ENCODE measurements at regions of chrX and their contacts with region 1.

Region 1: DNA sequence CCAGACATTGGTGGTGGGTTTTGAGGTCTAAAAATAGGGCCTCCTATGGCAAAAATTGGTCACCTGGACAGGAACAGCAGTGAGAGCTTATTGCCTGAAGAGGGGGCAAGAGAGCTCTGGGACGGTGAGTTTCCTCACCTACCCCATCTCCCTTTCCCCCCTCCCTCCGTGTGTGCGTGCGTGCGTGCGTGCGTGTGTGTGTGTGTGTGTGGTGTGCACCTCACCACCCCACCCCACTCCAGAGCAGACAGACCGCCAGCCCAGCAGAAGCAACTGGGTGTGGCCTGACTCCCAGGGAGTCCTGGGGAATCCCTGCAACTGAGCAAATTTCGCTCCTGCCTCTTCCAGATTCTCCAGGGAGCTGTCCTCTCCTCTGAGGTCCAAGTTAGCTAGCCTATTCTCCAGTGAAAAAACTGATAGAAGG is 44.7 kb downstream of the PRPS1 start:
- DNase-seq: peak; percentile 84
- ATAC-seq: peak; percentile 41
- H3K4me3 Mint-ChIP-seq: peak overlapping the region; percentile 48
- H3K27ac Mint-ChIP-seq: peak overlapping the region; percentile 92
- H3K4me1 Mint-ChIP-seq: peaks cover 45% of the 10 kb centered on the region
- H3K27me3 Mint-ChIP-seq: no peaks in the 10 kb centered on the region

Region 2: GRCh38 chrX:107654872-107655761 is 17.9 kb before region 1 on chrX:
- CTCF ChIA-PET with region 1: interaction called, 27 read pairs
- DNase-seq: peak; percentile 70
- ATAC-seq: peak; percentile 90
- H3K4me3 Mint-ChIP-seq: no peak overlapping the region
- H3K27ac Mint-ChIP-seq: no peak overlapping the region
- H3K4me1 Mint-ChIP-seq: peaks cover 12% of the 10 kb centered on the region
- H3K27me3 Mint-ChIP-seq: no peaks in the 10 kb centered on the region

Region 3: DNA sequence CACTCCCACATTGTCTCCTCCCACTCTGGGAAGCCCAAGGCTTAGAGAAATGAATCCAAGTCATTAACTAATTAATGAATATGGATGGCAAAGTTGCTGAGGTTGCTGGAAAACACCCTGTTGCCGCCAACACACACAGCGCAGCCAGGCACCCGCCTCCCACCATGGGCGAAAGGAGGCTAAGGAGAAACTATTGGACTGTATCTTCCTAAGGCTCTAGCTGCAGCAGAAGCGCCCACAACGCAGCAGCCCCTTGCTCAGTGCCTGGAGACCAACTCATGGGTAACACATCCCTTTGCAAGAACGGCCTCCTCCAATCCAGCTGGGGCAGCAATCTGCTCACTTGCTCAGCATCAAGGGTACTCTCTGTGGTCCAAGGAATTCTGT is 68.4 kb after region 1 on chrX:
- CTCF ChIA-PET with region 1: interaction called, 12 read pairs
- DNase-seq: no peak
- ATAC-seq: peak; percentile 5
- H3K4me3 Mint-ChIP-seq: peak overlapping the region; percentile 68
- H3K27ac Mint-ChIP-seq: peak overlapping the region; percentile 98
- H3K4me1 Mint-ChIP-seq: peaks cover 14% of the 10 kb centered on the region
- H3K27me3 Mint-ChIP-seq: no peaks in the 10 kb centered on the region